Left ventricle myocardium inferior (tissue), 1 donor: ENCODE measurements at regions of chr17 and their contacts with region 1.

Region 1: DNA sequence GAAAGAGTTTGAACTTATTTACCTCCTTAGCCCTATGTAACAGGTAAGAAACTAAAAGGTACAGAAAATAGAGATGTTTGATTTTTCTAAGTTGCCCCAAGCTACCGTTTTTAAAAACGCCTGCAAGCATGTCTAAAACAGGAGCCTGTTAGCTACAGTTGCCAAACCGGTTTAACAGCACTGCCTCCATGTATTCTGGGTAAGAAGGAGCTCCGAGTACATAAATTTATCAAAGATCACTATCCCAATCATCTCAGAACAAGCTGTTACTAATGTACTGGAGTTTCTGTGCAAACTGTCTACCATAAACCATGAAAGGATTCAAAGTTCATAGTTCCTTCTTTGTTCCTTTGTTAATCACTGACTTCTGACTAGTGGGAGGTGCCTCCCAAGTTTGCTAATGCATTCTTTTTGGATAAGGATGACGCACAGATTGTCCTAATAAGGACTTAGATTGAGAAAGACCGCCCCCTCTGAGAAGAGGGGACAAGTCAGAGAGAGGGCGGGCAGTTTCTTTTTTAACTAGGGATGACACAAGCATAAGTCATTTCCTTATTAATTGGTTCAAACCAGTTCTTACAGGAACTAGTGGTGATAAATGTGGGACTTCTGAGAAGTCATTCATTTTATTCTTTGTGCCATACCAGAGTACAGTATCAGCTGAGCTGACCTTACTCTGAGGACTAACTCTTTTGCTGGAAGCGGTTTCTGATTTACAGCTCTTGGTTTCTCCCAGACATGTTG is 55.3 kb downstream of the TUBD1 start:
- DNase-seq: no peak
- H3K4me3 ChIP-seq: peak overlapping the region; percentile 65
- H3K27ac ChIP-seq: peak overlapping the region; percentile 89
- H3K4me1 ChIP-seq: peaks cover 59% of the 10 kb centered on the region
- H3K27me3 ChIP-seq: no peaks in the 10 kb centered on the region
- CTCF ChIP-seq: no peak

Region 2: GRCh38 chr17:59707114-59707970 is 130.1 kb before region 1 on chr17 and contains the starts of genes PTRH2 and VMP1:
- intact Hi-C with region 1: no loop called
- DNase-seq: peak; percentile 98
- H3K4me3 ChIP-seq: peak within 1 kb of the TSS; percentile 88
- H3K27ac ChIP-seq: peak within 1 kb of the TSS; percentile 93
- H3K4me1 ChIP-seq: peaks cover 71% of the 10 kb centered on the region
- H3K27me3 ChIP-seq: no peaks in the 10 kb centered on the region
- CTCF ChIP-seq: no peak
- total RNA-seq, gene PTRH2: 10.9 TPM
- total RNA-seq, gene VMP1: 50.8 TPM

Region 3: DNA sequence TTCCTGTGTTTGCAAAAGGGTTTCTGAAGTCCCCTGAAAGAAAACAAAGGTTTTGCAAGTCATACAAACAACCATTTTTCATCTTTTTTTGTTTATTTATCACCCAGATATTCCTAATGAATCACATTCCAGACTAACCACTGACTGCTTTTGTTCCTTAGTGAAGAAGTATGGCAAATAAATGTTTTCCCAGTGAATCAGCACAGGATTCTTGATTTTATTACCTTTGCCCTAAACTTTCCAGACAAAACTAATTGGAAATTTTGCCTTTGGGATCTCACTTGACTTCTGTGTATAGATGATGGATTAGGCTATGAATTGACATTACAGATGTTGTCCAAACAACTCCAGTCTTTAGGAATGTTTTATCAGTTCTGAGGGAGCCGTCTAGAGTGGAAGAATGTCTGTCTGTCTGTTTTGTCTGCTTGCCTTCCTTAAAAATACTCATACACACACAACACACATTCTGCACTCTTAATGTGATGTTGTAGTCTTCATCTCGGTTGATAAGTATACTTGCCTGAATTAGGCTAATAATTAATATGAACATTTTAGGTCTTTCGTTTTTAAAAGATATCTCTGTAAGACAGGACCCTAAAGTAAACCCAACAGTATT is 81.1 kb before region 1 on chr17:
- intact Hi-C with region 1: loop called (anchors 5 kb)
- DNase-seq: no peak
- H3K4me3 ChIP-seq: no peak overlapping the region
- H3K27ac ChIP-seq: no peak overlapping the region
- H3K4me1 ChIP-seq: peaks cover 9% of the 10 kb centered on the region
- H3K27me3 ChIP-seq: no peaks in the 10 kb centered on the region
- CTCF ChIP-seq: no peak